RWPE1 (cell line): ENCODE measurements at regions of chr10 and their contacts with region 1.

Region 1: GRCh38 chr10:97000487-97001182 is 168.5 kb downstream of the LCOR start:
- DNase-seq: peak; percentile 50
- H3K27ac ChIP-seq: peak overlapping the region; percentile 63
- CTCF ChIP-seq: no peak

Region 2: DNA sequence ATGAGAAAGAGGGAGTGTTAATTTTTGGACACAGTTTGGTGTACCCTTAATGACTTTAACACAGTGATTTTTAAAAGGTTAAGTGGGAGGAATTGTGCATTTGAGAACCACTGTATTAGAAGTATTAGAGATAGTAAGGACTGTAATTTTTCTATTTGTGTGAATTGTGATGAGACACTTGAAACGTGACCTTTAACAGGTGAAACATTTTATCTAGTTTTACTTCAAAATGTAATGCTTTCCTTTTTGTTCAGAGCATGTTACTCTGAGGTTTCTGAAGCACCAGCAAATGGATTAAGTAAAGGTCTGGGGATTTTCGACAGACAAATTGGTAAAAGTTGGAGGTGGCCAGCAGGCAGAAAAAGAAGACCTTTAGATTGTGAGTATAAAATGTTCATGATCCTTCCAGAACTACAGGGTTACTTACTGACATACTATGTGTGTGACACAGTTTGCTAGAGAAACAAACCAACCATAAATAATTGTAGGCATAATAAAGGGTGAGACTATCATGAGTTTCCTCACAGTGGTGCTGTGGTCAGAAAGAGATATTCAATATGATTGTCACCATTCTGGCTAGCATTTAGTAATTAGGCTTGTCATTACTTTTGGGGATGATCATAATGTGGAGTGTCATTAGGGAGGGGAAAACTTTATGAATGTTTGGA is 142.5 kb before region 1 on chr10:
- CTCF ChIA-PET with region 1: no interaction called
- POLR2A ChIA-PET with region 1: no interaction called
- DNase-seq: no peak
- H3K27ac ChIP-seq: no peak overlapping the region
- CTCF ChIP-seq: no peak

Region 3: GRCh38 chr10:96949039-96949683 is 51.5 kb before region 1 on chr10:
- CTCF ChIA-PET with region 1: no interaction called
- POLR2A ChIA-PET with region 1: no interaction called
- DNase-seq: no peak
- H3K27ac ChIP-seq: no peak overlapping the region
- CTCF ChIP-seq: no peak

Region 4: GRCh38 chr10:97011397-97011796 is 10.8 kb after region 1 on chr10:
- CTCF ChIA-PET with region 1: interaction called, 5 read pairs
- POLR2A ChIA-PET with region 1: interaction called, 10 read pairs
- DNase-seq: no peak
- H3K27ac ChIP-seq: no peak overlapping the region
- CTCF ChIP-seq: no peak